ENCODE measurements at regions of chr4 and their contacts with region 1.

Region 1: GRCh38 chr4:140037357-140038030 is 116.5 kb downstream of the MAML3 start:
- DNase-seq: peak; percentile 46 to 95
- H3K4me3 ChIP-seq: no peak overlapping the region
- H3K27ac ChIP-seq: peak overlapping the region; percentile 95
- H3K4me1 ChIP-seq: peaks cover 34% of the 10 kb centered on the region
- H3K27me3 ChIP-seq: no peaks in the 10 kb centered on the region
- CTCF ChIP-seq: no peak

Region 2: DNA sequence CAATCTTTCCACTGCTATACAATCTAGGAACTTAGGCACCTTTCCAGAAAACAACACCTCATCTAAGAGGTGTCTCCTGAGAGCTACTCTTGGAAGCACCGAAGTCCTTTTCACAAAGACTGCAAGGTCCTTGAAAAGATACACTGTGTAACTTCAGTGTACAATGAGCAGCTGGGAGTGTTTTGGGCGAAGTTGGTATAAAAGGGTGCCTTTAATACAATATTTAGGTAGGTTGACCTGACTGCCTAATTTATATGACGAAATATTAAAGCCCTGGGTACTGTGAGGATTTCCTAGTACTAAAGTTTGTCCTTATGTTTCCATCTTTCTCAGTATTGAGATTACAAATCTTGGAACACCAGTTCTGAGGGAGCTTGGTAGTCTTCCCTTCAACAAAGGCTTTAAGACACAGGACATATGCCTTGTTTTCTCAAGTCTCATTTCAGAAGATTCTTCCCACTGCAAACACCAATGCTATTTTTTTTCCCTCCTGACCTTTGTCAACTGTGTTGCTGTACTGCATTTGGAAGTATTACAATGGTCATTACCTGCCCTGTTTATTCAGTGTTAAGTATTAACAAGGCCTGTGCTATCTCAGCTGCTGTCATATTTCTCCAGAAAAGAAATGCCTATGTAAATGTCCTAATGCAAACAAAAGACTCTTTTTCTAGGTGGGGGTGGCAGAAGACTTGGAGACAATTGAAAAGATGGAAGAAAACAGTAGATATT is 17.7 kb before region 1 on chr4:
- CTCF ChIA-PET with region 1: no interaction called
- POLR2A ChIA-PET with region 1: interaction called, 9 read pairs
- intact Hi-C with region 1: loop called (anchors 1 kb)
- DNase-seq: peak in 1 of 2 experiments; percentile 48
- H3K4me3 ChIP-seq: no peak overlapping the region
- H3K27ac ChIP-seq: peak overlapping the region; percentile 93
- H3K4me1 ChIP-seq: peaks cover 50% of the 10 kb centered on the region
- H3K27me3 ChIP-seq: no peaks in the 10 kb centered on the region
- CTCF ChIP-seq: no peak

Region 3: DNA sequence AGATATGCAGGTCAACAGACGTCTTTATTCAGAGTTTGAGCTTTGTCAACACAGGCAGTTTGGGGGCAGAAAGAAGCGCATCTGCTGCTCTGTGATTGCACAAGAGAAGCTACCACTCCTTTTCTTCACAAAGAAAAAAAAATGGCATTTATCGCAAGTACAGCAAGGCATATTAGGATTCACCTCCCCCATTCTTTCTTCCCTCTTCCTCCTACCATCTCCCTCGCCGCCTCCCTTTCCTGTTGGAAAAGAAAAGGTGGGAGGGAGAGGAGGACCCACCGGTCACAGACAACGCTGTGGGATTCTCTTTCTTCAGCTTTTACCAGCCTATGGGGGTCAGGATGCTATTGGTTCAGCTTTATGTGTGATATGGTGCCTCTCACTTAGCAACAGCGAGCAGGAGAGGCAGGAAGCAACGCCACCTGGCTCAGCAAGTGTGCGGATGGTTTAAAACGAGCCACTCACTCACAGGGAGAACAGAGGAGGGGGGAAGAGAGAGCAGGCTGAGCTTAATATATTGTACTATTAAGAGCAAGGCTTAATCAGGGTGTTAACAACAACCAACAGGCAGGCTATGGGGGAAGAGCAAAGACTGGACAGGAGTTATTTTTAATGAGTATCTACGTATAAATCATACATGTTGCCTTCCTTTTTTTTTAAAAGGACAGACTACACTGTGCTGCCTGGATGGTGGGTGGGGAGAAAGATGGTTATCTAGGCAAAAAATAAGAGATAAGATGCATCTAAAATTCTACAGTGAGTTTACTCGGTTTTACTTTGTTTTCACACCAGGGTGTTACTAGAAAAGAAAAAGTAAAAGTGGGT is 11.7 kb after region 1 on chr4:
- CTCF ChIA-PET with region 1: no interaction called
- POLR2A ChIA-PET with region 1: interaction called, 17 read pairs
- intact Hi-C with region 1: no loop called
- DNase-seq: peak; percentile 59 to 62
- H3K4me3 ChIP-seq: peak overlapping the region; percentile 56
- H3K27ac ChIP-seq: peak overlapping the region; percentile 96
- H3K4me1 ChIP-seq: peaks cover 62% of the 10 kb centered on the region
- H3K27me3 ChIP-seq: no peaks in the 10 kb centered on the region
- CTCF ChIP-seq: no peak

Region 4: GRCh38 chr4:140085062-140085622 is 47.6 kb after region 1 on chr4:
- CTCF ChIA-PET with region 1: no interaction called
- POLR2A ChIA-PET with region 1: no interaction called
- intact Hi-C with region 1: no loop called
- DNase-seq: peak in 1 of 2 experiments; percentile 76
- H3K4me3 ChIP-seq: peak overlapping the region; percentile 11; the same call in 1 of the 2 replicates
- H3K27ac ChIP-seq: peak overlapping the region; percentile 76
- H3K4me1 ChIP-seq: peaks cover 57% of the 10 kb centered on the region
- H3K27me3 ChIP-seq: no peaks in the 10 kb centered on the region
- CTCF ChIP-seq: no peak

Region 5: GRCh38 chr4:140135529-140136088 is 98.1 kb after region 1 on chr4:
- CTCF ChIA-PET with region 1: no interaction called
- POLR2A ChIA-PET with region 1: no interaction called
- intact Hi-C with region 1: no loop called
- DNase-seq: no peak
- H3K4me3 ChIP-seq: no peak overlapping the region
- H3K27ac ChIP-seq: peak overlapping the region; percentile 99
- H3K4me1 ChIP-seq: peaks cover 94% of the 10 kb centered on the region
- H3K27me3 ChIP-seq: no peaks in the 10 kb centered on the region
- CTCF ChIP-seq: no peak